ENCODE measurements at regions of chr15 and their contacts with region 1.

Region 1: DNA sequence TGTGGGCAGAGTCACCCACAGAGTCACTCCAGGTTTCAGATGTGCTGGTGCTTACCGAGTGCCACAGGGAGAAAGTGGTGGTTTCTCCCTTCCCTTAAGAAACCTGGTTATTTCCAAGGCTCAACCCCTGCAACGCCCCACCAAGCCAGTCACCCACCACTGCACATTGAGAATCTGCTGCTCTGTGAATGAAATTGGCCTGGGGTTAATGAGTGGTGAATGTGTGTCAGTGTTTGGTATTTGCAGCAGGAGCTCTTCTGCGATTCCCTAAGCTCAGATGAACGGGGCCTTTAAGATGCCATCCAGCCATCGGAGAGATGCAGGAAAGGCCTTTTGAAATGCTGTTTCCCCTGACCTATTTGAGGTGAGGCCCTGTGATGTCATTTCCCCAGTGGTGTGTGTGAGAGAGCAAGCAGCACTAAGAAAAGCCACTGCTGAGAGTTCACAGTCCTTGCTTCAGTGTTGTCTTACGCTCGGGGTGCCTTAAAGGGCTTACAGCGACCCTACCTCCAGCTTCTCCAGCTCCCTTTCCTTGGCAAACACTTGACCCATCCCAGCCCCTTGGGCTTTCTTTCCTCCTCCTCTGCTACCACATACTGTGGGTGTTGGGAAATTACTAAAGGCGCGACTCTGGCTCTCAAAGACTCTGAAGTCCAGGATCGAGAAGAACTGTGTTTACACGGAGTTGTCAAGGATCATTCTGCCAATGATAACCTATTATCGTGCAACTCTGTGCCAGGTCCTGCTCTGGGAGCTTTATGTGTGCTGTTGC is 68.9 kb downstream of the SMAD3 start:
- DNase-seq: peak; percentile 61 to 91
- ATAC-seq: peak; percentile 91 to 97 (median 95)
- H3K4me3 ChIP-seq: peak overlapping the region; percentile 20
- H3K4me3 Mint-ChIP-seq: peak overlapping the region; percentile 93
- H3K27ac ChIP-seq: peak overlapping the region; percentile 92
- H3K27ac Mint-ChIP-seq: peak overlapping the region; percentile 100
- H3K4me1 ChIP-seq: peaks cover 77% of the 10 kb centered on the region
- H3K4me1 Mint-ChIP-seq: peaks cover 80 to 88% of the 10 kb centered on the region in 2 donors
- H3K27me3 ChIP-seq: no peaks in the 10 kb centered on the region
- H3K27me3 Mint-ChIP-seq: no peaks in the 10 kb centered on the region
- CTCF ChIP-seq: no peak

Region 2: DNA sequence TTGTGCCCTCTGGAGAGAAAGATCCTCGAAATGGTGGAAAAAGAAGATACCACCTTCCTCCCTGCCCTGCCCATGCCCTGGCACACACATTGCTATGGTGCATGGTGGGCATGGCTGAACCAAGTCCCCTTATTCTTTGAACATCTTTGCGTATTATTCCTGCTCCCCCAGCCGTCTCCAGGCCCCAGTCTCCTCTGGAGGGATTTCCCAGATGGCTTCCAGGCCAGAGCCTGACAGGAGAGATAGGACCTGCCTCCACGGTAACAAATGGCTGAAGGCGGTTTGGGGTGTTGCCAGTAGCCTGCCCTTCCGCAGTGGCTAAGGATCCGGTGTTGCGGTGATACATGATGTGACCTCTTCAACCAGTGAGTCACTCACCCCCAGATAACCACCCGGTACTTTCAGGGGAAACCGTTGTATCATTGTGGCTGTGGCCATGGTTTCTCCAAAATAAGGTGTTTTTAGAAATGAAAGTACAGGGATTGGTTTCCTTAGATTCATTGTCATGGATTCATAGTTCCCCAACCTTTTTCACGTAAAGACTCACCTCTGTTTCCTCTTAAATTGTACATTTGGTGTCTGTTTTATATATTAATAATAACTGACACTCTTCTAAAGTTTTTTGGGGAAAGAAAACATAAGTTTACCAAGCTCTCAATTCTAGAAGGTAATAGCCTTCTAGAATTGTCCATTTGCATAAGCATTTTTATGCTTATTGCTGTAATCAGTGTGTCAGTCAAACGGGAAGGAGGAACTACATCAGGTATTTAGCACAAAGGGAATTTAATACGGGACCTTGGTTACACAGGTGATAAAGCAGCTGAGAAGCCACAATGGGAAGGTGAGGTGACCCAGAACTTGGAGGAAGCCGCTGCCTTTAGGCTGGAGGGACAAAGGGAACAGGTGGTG is 42.9 kb before region 1 on chr15:
- intact Hi-C with region 1: loop called (anchors 1 kb)
- DNase-seq: peak; percentile 77 to 87
- ATAC-seq: peak; percentile 76 to 94 (median 92)
- H3K4me3 ChIP-seq: no peak overlapping the region
- H3K4me3 Mint-ChIP-seq: peak overlapping the region; percentile 89
- H3K27ac ChIP-seq: peak overlapping the region; percentile 71
- H3K27ac Mint-ChIP-seq: peak overlapping the region; percentile 91 to 96
- H3K4me1 ChIP-seq: peaks cover 95% of the 10 kb centered on the region
- H3K4me1 Mint-ChIP-seq: peaks cover 73 to 84% of the 10 kb centered on the region in 2 donors
- H3K27me3 ChIP-seq: no peaks in the 10 kb centered on the region
- H3K27me3 Mint-ChIP-seq: no peaks in the 10 kb centered on the region
- CTCF ChIP-seq: no peak

Region 3: DNA sequence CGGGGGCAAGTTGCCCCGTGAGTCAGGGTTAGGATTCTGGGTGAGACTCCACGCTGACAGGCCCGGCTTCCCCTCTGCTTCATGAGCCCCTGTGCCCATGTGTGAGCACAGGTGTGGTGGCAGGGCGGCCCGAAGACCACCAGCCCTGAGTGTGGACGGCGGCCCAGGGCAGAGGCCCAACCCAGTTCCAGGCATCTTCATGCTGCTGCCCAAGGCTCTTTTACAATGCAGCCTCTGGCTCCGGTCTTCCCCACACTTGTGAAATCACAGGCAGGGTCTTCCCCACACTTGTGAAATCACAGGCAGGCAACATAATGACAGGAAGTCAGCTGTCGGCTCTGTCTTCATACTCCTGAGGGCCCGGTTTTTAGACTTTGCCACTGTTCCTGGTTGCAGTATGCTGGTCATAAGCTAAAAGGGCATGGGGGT is 41.4 kb after region 1 on chr15:
- intact Hi-C with region 1: loop called (anchors 5 kb)
- DNase-seq: peak in 1 of 2 donors; percentile 53
- ATAC-seq: peak; percentile 74 to 92 (median 89)
- H3K4me3 ChIP-seq: no peak overlapping the region
- H3K4me3 Mint-ChIP-seq: no peak overlapping the region
- H3K27ac ChIP-seq: peak overlapping the region; percentile 12
- H3K27ac Mint-ChIP-seq: peak overlapping the region; percentile 74
- H3K4me1 ChIP-seq: peaks cover 21% of the 10 kb centered on the region
- H3K4me1 Mint-ChIP-seq: peaks cover 26 to 48% of the 10 kb centered on the region in 2 donors
- H3K27me3 ChIP-seq: no peaks in the 10 kb centered on the region
- H3K27me3 Mint-ChIP-seq: no peaks in the 10 kb centered on the region
- CTCF ChIP-seq: no peak

Region 4: GRCh38 chr15:67433495-67434099 is 299.3 kb after region 1 on chr15:
- intact Hi-C with region 1: no loop called
- DNase-seq: peak in 1 of 2 donors; percentile 39
- ATAC-seq: peak in 2 of 3 donors; percentile 42 to 49
- H3K4me3 ChIP-seq: no peak overlapping the region
- H3K4me3 Mint-ChIP-seq: no peak overlapping the region
- H3K27ac ChIP-seq: no peak overlapping the region
- H3K27ac Mint-ChIP-seq: no peak overlapping the region
- H3K4me1 ChIP-seq: no peaks in the 10 kb centered on the region
- H3K4me1 Mint-ChIP-seq: no peaks in the 10 kb centered on the region
- H3K27me3 ChIP-seq: no peaks in the 10 kb centered on the region
- H3K27me3 Mint-ChIP-seq: no peaks in the 10 kb centered on the region
- CTCF ChIP-seq: peak; percentile 67

Region 5: DNA sequence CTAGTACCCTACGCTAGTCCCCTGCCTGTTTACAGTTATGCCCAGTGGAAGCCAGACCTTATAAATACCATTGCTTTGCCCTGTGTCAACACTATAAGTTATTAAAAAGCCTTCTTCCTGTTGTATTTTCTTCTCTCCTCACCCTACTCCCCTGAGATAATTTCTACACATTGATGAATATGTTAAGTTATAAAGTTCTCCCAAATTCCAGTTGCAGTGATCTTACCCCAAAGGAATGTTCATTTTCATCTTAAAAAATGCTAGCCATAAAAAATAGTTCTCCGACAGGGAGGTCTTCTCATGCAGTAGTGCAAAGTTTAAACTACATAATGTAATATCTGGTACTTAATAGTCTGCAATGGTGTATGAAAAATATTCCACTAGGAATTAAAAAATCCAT is 466.8 kb after region 1 on chr15:
- intact Hi-C with region 1: no loop called
- DNase-seq: no peak
- ATAC-seq: no peak
- H3K4me3 ChIP-seq: no peak overlapping the region
- H3K4me3 Mint-ChIP-seq: no peak overlapping the region
- H3K27ac ChIP-seq: no peak overlapping the region
- H3K27ac Mint-ChIP-seq: no peak overlapping the region
- H3K4me1 ChIP-seq: no peaks in the 10 kb centered on the region
- H3K4me1 Mint-ChIP-seq: no peaks in the 10 kb centered on the region
- H3K27me3 ChIP-seq: no peaks in the 10 kb centered on the region
- H3K27me3 Mint-ChIP-seq: no peaks in the 10 kb centered on the region
- CTCF ChIP-seq: no peak

Measured in natural killer cell (primary cell).